ENCODE measurements at regions of chr9 and their contacts with region 1.

Region 1: GRCh38 chr9:96654443-96655197 is 497 bp downstream of the PRXL2C start:
- DNase-seq: peak; percentile 73 to 95
- H3K4me3 ChIP-seq: peak overlapping the region; percentile 64 to 92
- H3K27ac ChIP-seq: peak overlapping the region; percentile 96 to 100
- H3K4me1 ChIP-seq: peaks cover 4 to 7% of the 10 kb centered on the region in 2 donors
- H3K27me3 ChIP-seq: no peaks in the 10 kb centered on the region
- CTCF ChIP-seq: peak in 1 of 3 experiments; percentile 47

Region 2: GRCh38 chr9:96449845-96450612 is 204.6 kb before region 1 on chr9 and contains the start of gene HABP4:
- intact Hi-C with region 1: loop called (anchors 1 kb)
- DNase-seq: peak; percentile 89 to 99
- H3K4me3 ChIP-seq: peak within 1 kb of the TSS; percentile 92 to 98
- H3K27ac ChIP-seq: peak within 1 kb of the TSS; percentile 94 to 98
- H3K4me1 ChIP-seq: peaks cover 0 to 35% of the 10 kb centered on the region in 2 donors
- H3K27me3 ChIP-seq: no peaks in the 10 kb centered on the region
- CTCF ChIP-seq: no peak
- total RNA-seq, gene HABP4: 26.9 TPM

Region 3: GRCh38 chr9:96486368-96487028 is 168.1 kb before region 1 on chr9:
- intact Hi-C with region 1: loop called (anchors 1 kb)
- DNase-seq: peak in 1 of 2 donors; percentile 88
- H3K4me3 ChIP-seq: peak overlapping the region in 1 of 2 donors; percentile 12
- H3K27ac ChIP-seq: peak overlapping the region; percentile 92 to 93
- H3K4me1 ChIP-seq: peaks cover 19 to 57% of the 10 kb centered on the region in 2 donors
- H3K27me3 ChIP-seq: no peaks in the 10 kb centered on the region
- CTCF ChIP-seq: no peak

Region 4: GRCh38 chr9:96555567-96556386 is 98.8 kb before region 1 on chr9:
- intact Hi-C with region 1: loop called (anchors 5 kb)
- DNase-seq: no peak
- H3K4me3 ChIP-seq: peak overlapping the region in 1 of 2 donors; percentile 35
- H3K27ac ChIP-seq: peak overlapping the region; percentile 92 to 96
- H3K4me1 ChIP-seq: peaks cover 10 to 57% of the 10 kb centered on the region in 2 donors
- H3K27me3 ChIP-seq: no peaks in the 10 kb centered on the region
- CTCF ChIP-seq: no peak

Region 5: GRCh38 chr9:96566498-96567207 is 88.0 kb before region 1 on chr9:
- intact Hi-C with region 1: loop called (anchors 2 kb)
- DNase-seq: peak; percentile 24 to 91
- H3K4me3 ChIP-seq: peak overlapping the region; percentile 70 to 88
- H3K27ac ChIP-seq: peak overlapping the region; percentile 86 to 96
- H3K4me1 ChIP-seq: peaks cover 0 to 11% of the 10 kb centered on the region in 2 donors
- H3K27me3 ChIP-seq: no peaks in the 10 kb centered on the region
- CTCF ChIP-seq: peak; percentile 72 to 80 (median 78)

Region 6: DNA sequence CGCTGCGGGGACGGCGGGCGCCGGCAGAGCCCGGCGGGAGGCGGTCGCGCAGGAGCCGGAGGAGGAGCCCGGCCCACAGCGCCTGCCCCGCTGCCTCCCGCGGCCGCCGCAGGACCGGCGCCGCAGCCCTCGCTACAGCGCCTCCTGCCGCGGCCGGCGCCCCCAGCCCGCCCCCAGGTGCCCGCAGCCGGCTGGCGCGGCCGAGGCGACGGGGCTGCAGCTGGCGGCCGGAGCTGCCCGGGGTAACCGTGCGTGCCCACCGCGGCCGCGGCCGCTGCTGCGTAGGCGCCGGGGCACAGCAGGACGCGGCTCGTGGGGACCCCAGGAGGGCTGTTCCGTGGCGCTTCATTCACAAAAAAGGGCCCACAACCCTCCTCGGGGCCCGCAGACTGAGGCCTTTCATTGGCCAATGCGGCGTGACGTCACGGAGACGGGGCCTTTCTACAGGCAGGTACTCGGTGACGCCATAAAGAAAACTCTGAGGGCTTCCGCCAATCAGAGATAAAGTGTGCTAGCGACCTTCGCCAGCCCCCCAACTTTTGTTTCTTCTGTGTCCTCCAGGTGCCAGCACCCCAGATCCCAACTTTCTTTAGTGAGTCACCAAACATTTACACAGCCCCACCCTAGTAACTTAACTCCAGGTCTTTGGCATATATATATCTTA is 35.0 kb before region 1 on chr9 and contains the start of gene CDC14B:
- intact Hi-C with region 1: loop called (anchors 1 kb)
- DNase-seq: peak; percentile 77 to 95
- H3K4me3 ChIP-seq: peak within 1 kb of the TSS; percentile 98
- H3K27ac ChIP-seq: peak within 1 kb of the TSS; percentile 91 to 93
- H3K4me1 ChIP-seq: no peaks in the 10 kb centered on the region
- H3K27me3 ChIP-seq: no peaks in the 10 kb centered on the region
- CTCF ChIP-seq: peak in 1 of 3 experiments; percentile 37
- total RNA-seq, gene CDC14B: 47.8 TPM

Region 7: GRCh38 chr9:96686548-96687335 is 32.1 kb after region 1 on chr9:
- intact Hi-C with region 1: loop called (anchors 1 kb)
- DNase-seq: peak; percentile 37 to 91
- H3K4me3 ChIP-seq: peak overlapping the region; percentile 62 to 74
- H3K27ac ChIP-seq: peak overlapping the region; percentile 63 to 79
- H3K4me1 ChIP-seq: peaks cover 0 to 5% of the 10 kb centered on the region in 2 donors
- H3K27me3 ChIP-seq: no peaks in the 10 kb centered on the region
- CTCF ChIP-seq: peak; percentile 23 to 52 (median 47)